PC-9 (cell line): ENCODE measurements at regions of chr14 and their contacts with region 1.

Region 1: GRCh38 chr14:79631276-79631675 is 580.0 kb downstream of the DIO2 start:
- DNase-seq: no peak
- H3K4me3 ChIP-seq: no peak overlapping the region
- H3K27ac ChIP-seq: no peak overlapping the region
- H3K4me1 ChIP-seq: no peaks in the 10 kb centered on the region
- H3K27me3 ChIP-seq: no peaks in the 10 kb centered on the region; the same call in 1 of the 2 replicates
- CTCF ChIP-seq: no peak

Region 2: GRCh38 chr14:77674931-77675330 is 1956.3 kb before region 1 on chr14:
- CTCF ChIA-PET with region 1: no interaction called
- POLR2A ChIA-PET with region 1: no interaction called
- intact Hi-C with region 1: no loop called
- DNase-seq: no peak
- H3K4me3 ChIP-seq: no peak overlapping the region
- H3K27ac ChIP-seq: no peak overlapping the region
- H3K4me1 ChIP-seq: no peaks in the 10 kb centered on the region
- H3K27me3 ChIP-seq: no peaks in the 10 kb centered on the region
- CTCF ChIP-seq: no peak

Region 3: DNA sequence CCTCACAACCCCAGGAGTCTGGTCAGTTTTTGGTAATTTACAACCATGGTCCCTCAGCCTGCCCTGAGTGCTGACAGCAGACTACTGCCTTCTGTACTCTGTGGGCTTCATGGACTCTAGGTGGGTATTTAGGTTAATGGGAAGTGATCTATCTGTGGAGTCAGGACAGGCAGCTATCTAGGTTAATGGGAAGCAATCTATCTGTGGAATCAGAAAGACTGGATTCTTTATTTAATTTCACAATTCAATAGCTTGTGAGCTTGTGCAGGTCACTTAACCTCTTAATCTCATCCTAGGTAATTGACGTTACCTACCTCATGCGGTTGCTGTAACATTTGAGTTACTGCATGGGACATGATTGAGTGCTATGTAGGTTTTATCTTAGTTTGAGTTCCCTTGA is 683.6 kb before region 1 on chr14:
- CTCF ChIA-PET with region 1: interaction called, 15 read pairs
- POLR2A ChIA-PET with region 1: no interaction called
- intact Hi-C with region 1: no loop called
- DNase-seq: no peak
- H3K4me3 ChIP-seq: no peak overlapping the region
- H3K27ac ChIP-seq: no peak overlapping the region
- H3K4me1 ChIP-seq: peaks cover 8% of the 10 kb centered on the region
- H3K27me3 ChIP-seq: peaks cover 11% of the 10 kb centered on the region; the same call in 1 of the 2 replicates
- CTCF ChIP-seq: no peak